ENCODE measurements at regions of chr7 and their contacts with region 1.

Region 1: GRCh38 chr7:93551063-93551904 is 23.2 kb downstream of the CALCR start:
- DNase-seq: peak; percentile 49
- ATAC-seq: peak; percentile 76
- H3K4me3 ChIP-seq: no peak overlapping the region
- H3K27ac ChIP-seq: no peak overlapping the region
- H3K4me1 ChIP-seq: no peaks in the 10 kb centered on the region
- H3K27me3 ChIP-seq: no peaks in the 10 kb centered on the region; the same call in 1 of the 2 replicates
- CTCF ChIP-seq: peak; percentile 52 to 71 (median 67); a peak in 5 of 6 replicates
- POLR2A ChIP-seq: no peak
- RAD21 ChIP-seq: peak; percentile 68

Region 2: GRCh38 chr7:93092757-93093370 is 458.4 kb before region 1 on chr7:
- CTCF ChIA-PET with region 1: no interaction called
- POLR2A ChIA-PET with region 1: no interaction called
- RAD21 ChIA-PET with region 1: no interaction called
- intact Hi-C with region 1: loop called (anchors 5 kb)
- DNase-seq: peak; percentile 21
- ATAC-seq: peak; percentile 81
- H3K4me3 ChIP-seq: no peak overlapping the region
- H3K27ac ChIP-seq: no peak overlapping the region
- H3K4me1 ChIP-seq: no peaks in the 10 kb centered on the region
- H3K27me3 ChIP-seq: no peaks in the 10 kb centered on the region
- CTCF ChIP-seq: peak; percentile 43 to 54 (median 50); a peak in 5 of 6 replicates
- POLR2A ChIP-seq: no peak
- RAD21 ChIP-seq: peak; percentile 73

Region 3: DNA sequence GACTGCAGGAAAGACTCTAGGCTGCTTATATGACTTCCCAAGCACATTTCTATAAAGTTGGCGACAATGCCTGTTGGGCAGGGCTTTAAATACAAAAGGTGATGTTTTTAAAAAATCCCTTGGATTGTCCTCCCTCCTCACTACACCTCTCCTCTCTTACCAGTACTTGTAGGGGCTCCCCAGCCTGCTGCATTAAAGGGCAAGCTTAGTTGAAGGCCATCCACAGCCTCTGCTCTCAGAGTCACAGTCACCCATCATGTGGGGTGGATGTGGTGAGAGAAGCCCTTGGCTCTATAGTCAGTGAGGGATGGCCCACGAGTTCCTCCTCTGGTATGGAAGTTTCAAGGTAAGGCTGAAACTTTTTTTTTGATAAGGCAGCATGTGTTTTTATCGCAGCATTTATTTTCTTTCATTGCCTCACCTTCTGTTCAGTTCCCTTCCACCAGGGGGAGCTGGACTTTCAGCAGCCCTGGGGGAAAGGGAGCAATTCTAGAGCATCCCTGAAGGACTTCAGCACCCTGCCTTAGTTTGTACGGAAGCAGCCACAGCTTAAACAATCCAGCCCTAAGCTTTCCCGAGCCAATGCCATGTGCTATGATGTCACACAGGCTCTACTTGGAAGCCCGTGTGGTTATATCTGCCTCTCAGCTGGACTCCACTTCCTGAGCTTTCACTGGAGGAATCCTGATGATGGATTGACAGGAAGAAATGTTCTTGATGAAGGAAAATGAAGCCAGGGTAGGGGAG is 108.6 kb before region 1 on chr7:
- CTCF ChIA-PET with region 1: interaction called, 6 read pairs
- POLR2A ChIA-PET with region 1: no interaction called
- RAD21 ChIA-PET with region 1: no interaction called
- intact Hi-C with region 1: loop called (anchors 1 kb)
- DNase-seq: peak; percentile 34
- ATAC-seq: peak; percentile 98
- H3K4me3 ChIP-seq: no peak overlapping the region
- H3K27ac ChIP-seq: no peak overlapping the region
- H3K4me1 ChIP-seq: no peaks in the 10 kb centered on the region
- H3K27me3 ChIP-seq: peaks cover 22% of the 10 kb centered on the region; the same call in 1 of the 2 replicates
- CTCF ChIP-seq: peak; percentile 46 to 92 (median 89); a peak in 5 of 6 replicates
- POLR2A ChIP-seq: no peak
- RAD21 ChIP-seq: peak; percentile 65

Region 4: DNA sequence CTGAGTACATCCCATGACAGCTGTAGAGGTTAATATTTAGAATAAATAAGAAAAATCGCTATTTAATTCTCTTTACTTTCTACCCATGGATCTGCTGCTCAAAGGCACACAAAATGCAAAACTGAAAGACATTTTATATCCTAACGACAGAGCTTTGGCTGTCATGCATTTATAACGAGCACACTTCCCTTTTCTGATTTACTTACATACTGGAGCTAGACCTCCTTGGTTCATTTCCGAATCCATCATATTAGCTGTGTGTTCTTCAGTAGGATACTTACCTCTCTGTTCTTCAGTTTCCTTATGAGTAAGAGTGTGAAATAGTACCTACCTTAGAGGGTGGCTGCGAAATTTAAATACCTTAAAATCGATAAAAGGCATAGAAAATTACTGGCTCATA is 12.3 kb after region 1 on chr7:
- CTCF ChIA-PET with region 1: interaction called, 21 read pairs
- POLR2A ChIA-PET with region 1: no interaction called
- RAD21 ChIA-PET with region 1: interaction called in 1 of 2 experiments, 3 read pairs
- intact Hi-C with region 1: no loop called
- DNase-seq: no peak
- ATAC-seq: no peak
- H3K4me3 ChIP-seq: no peak overlapping the region
- H3K27ac ChIP-seq: no peak overlapping the region
- H3K4me1 ChIP-seq: no peaks in the 10 kb centered on the region
- H3K27me3 ChIP-seq: 0 out of 2 replicates have a peak, but pooled peaks cover 5% of the 10 kb centered on the region
- CTCF ChIP-seq: no peak
- POLR2A ChIP-seq: no peak
- RAD21 ChIP-seq: no peak

Region 5: GRCh38 chr7:94028768-94029167 is 477.5 kb after region 1 on chr7:
- CTCF ChIA-PET with region 1: no interaction called
- POLR2A ChIA-PET with region 1: no interaction called
- RAD21 ChIA-PET with region 1: no interaction called
- intact Hi-C with region 1: no loop called
- DNase-seq: no peak
- ATAC-seq: no peak
- H3K4me3 ChIP-seq: no peak overlapping the region
- H3K27ac ChIP-seq: no peak overlapping the region
- H3K4me1 ChIP-seq: no peaks in the 10 kb centered on the region
- H3K27me3 ChIP-seq: peaks cover 38% of the 10 kb centered on the region
- CTCF ChIP-seq: no peak
- POLR2A ChIP-seq: no peak
- RAD21 ChIP-seq: no peak

Measured in HCT116 (cell line).